ENCODE measurements at regions of chr18 and their contacts with region 1.

Region 1: GRCh38 chr18:23994361-23994902 is 20.1 kb upstream of the TTC39C start:
- DNase-seq: peak; percentile 61 to 81 (median 66)
- H3K4me3 ChIP-seq: peak overlapping the region; percentile 49 to 70
- H3K4me3 Mint-ChIP-seq: peak overlapping the region; percentile 82 to 96 (median 91)
- H3K27ac ChIP-seq: peak overlapping the region; percentile 78
- H3K27ac Mint-ChIP-seq: peak overlapping the region; percentile 86 to 98 (median 96)
- H3K4me1 ChIP-seq: peaks cover 94% of the 10 kb centered on the region
- H3K4me1 Mint-ChIP-seq: peaks cover 49 to 91% (median 63%) of the 10 kb centered on the region in 4 donors
- H3K27me3 ChIP-seq: no peaks in the 10 kb centered on the region
- H3K27me3 Mint-ChIP-seq: no peaks in the 10 kb centered on the region

Region 2: GRCh38 chr18:23977103-23977502 is 17.3 kb before region 1 on chr18:
- CTCF ChIA-PET with region 1: interaction called, 80 read pairs
- POLR2A ChIA-PET with region 1: interaction called, 155 read pairs
- intact Hi-C with region 1: no loop called
- DNase-seq: no peak
- H3K4me3 ChIP-seq: no peak overlapping the region
- H3K4me3 Mint-ChIP-seq: no peak overlapping the region
- H3K27ac ChIP-seq: no peak overlapping the region
- H3K27ac Mint-ChIP-seq: peak overlapping the region in 3 of 7 donors; percentile 39 to 87 (median 60)
- H3K4me1 ChIP-seq: peaks cover 48% of the 10 kb centered on the region
- H3K4me1 Mint-ChIP-seq: peaks cover 52 to 92% (median 68%) of the 10 kb centered on the region in 4 donors
- H3K27me3 ChIP-seq: no peaks in the 10 kb centered on the region
- H3K27me3 Mint-ChIP-seq: no peaks in the 10 kb centered on the region

Region 3: GRCh38 chr18:23982155-23983079 is 12.0 kb before region 1 on chr18:
- CTCF ChIA-PET with region 1: interaction called, 4 read pairs
- POLR2A ChIA-PET with region 1: interaction called, 99 read pairs
- intact Hi-C with region 1: no loop called
- DNase-seq: no peak
- H3K4me3 ChIP-seq: no peak overlapping the region
- H3K4me3 Mint-ChIP-seq: peak overlapping the region in 4 of 8 donors; percentile 4 to 47 (median 14)
- H3K27ac ChIP-seq: no peak overlapping the region
- H3K27ac Mint-ChIP-seq: peak overlapping the region in 5 of 7 donors; percentile 2 to 89 (median 74)
- H3K4me1 ChIP-seq: peaks cover 35% of the 10 kb centered on the region
- H3K4me1 Mint-ChIP-seq: peaks cover 30 to 65% (median 50%) of the 10 kb centered on the region in 4 donors
- H3K27me3 ChIP-seq: no peaks in the 10 kb centered on the region
- H3K27me3 Mint-ChIP-seq: no peaks in the 10 kb centered on the region

Region 4: GRCh38 chr18:24094561-24094960 is 100.1 kb after region 1 on chr18:
- CTCF ChIA-PET with region 1: no interaction called
- POLR2A ChIA-PET with region 1: no interaction called
- intact Hi-C with region 1: no loop called
- DNase-seq: no peak
- H3K4me3 ChIP-seq: no peak overlapping the region
- H3K4me3 Mint-ChIP-seq: no peak overlapping the region
- H3K27ac ChIP-seq: no peak overlapping the region
- H3K27ac Mint-ChIP-seq: peak overlapping the region in 6 of 7 donors; percentile 14 to 60 (median 44)
- H3K4me1 ChIP-seq: peaks cover 23% of the 10 kb centered on the region
- H3K4me1 Mint-ChIP-seq: peaks cover 26 to 50% (median 33%) of the 10 kb centered on the region in 4 donors
- H3K27me3 ChIP-seq: no peaks in the 10 kb centered on the region
- H3K27me3 Mint-ChIP-seq: no peaks in the 10 kb centered on the region